ENCODE measurements at regions of chr11 and their contacts with region 1.

Region 1: GRCh38 chr11:80655834-80656233 is 1215.0 kb upstream of the TENM4 start:
- DNase-seq: no peak
- H3K4me3 ChIP-seq: no peak overlapping the region
- CTCF ChIP-seq: no peak

Region 2: DNA sequence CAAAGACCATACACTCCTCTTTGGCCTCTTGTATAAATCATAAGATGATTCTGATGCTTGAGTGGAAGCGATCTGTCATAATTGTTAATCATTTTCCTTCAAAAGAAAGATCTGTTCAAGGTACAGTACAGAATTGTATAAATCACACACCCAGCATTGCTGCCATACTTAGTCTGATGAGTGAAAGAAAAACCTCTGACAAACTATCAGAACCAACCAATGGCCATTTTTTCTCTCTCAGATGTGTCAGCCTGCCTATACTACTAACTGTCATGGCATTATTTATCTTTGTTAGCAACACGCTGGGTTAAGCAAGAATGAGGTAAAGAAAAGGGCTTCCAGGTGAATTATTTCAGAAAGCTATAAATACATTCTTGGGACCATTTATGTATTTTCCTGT is 102.3 kb before region 1 on chr11:
- in situ Hi-C with region 1: loop called (anchors 5 kb)
- DNase-seq: no peak
- H3K4me3 ChIP-seq: no peak overlapping the region
- CTCF ChIP-seq: no peak

Region 3: DNA sequence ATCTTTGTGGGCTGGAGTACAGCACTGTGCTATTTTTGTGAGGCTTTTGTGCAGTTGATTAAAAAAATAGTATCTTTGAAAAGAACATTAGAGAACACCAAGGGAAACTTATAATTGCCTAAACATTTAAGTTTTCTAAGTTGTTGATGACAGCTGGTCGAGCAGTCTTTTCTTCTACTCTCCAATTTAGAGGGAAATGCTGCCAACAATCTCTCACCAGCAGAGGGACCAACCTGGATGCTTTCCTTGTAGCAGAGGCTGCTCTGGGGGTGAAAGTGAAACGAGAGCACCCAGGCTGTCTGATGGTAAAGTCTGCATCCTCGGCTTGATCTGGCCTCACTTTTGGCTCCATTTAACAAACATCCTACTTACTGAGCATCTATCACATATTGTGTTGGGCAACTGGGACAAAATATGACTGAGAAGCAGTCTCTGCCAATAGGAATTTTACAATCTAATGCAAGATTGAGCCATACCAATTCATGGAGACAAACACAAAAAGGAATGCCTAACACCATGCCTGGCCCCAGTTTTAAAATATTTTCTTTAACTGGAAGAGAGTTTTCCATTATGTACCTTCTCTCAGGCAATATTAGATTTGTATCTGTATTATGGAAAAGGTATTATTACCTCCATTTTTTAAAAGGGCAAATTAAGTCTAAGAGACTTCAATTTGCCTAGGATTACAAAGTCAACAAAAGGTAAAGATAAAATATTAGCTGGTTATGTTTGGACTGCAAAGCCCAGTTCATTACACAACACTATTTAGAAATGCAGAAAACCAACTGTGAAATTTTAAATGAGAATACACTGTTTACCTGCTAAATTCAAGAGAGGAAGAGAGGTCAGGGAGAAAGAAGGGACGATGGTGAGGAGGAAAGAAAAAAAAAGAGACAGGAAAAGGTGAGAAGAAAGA is 71.7 kb after region 1 on chr11:
- in situ Hi-C with region 1: no loop called
- DNase-seq: peak; percentile 2
- H3K4me3 ChIP-seq: no peak overlapping the region
- CTCF ChIP-seq: peak; percentile 54

Measured in astrocyte of the cerebellum (primary cell).